Esophagus muscularis mucosa (tissue), 4 donors: ENCODE measurements at regions of chr5 and their contacts with region 1.

Region 1: GRCh38 chr5:138542956-138543729 is at the start of gene ETF1:
- DNase-seq: peak; percentile 100
- H3K4me3 ChIP-seq: peak within 1 kb of the TSS; percentile 75 to 100 (median 84)
- H3K27ac ChIP-seq: peak within 1 kb of the TSS; percentile 92 to 100 (median 98)
- H3K4me1 ChIP-seq: peaks cover 67 to 79% (median 77%) of the 10 kb centered on the region in 4 donors
- H3K27me3 ChIP-seq: no peaks in the 10 kb centered on the region
- CTCF ChIP-seq: no peak
- EP300 ChIP-seq: no peak
- POLR2A ChIP-seq: peak; percentile 100
- total RNA-seq, gene ETF1: 90.5 to 154 (median 111) TPM

Region 2: GRCh38 chr5:138337685-138338410 is 205.3 kb before region 1 on chr5 and contains the start of gene FAM53C:
- intact Hi-C with region 1: no loop called
- DNase-seq: peak; percentile 98
- H3K4me3 ChIP-seq: peak within 1 kb of the TSS; percentile 79 to 97 (median 89)
- H3K27ac ChIP-seq: peak within 1 kb of the TSS; percentile 91 to 98 (median 94)
- H3K4me1 ChIP-seq: peaks cover 21 to 38% (median 34%) of the 10 kb centered on the region in 4 donors
- H3K27me3 ChIP-seq: no peaks in the 10 kb centered on the region
- CTCF ChIP-seq: no peak
- EP300 ChIP-seq: no peak
- POLR2A ChIP-seq: peak; percentile 93
- total RNA-seq, gene FAM53C: 22.4 to 40.0 (median 29.6) TPM

Region 3: GRCh38 chr5:138449501-138450239 is 93.5 kb before region 1 on chr5:
- intact Hi-C with region 1: loop called (anchors 5 kb)
- DNase-seq: peak; percentile 96
- H3K4me3 ChIP-seq: peak overlapping the region in 3 of 4 donors; percentile 7 to 30 (median 15)
- H3K27ac ChIP-seq: peak overlapping the region in 3 of 4 donors; percentile 9 to 64 (median 50)
- H3K4me1 ChIP-seq: peaks cover 9 to 18% (median 14%) of the 10 kb centered on the region in 4 donors
- H3K27me3 ChIP-seq: no peaks in the 10 kb centered on the region
- CTCF ChIP-seq: peak; percentile 90 to 97 (median 96)
- EP300 ChIP-seq: no peak
- POLR2A ChIP-seq: no peak